ENCODE measurements at regions of chr3 and their contacts with region 1.

Region 1: GRCh38 chr3:17894434-17895060 is 152.1 kb upstream of the TBC1D5 start:
- DNase-seq: peak; percentile 59
- ATAC-seq: peak; percentile 33
- H3K4me3 ChIP-seq: no peak overlapping the region
- H3K4me3 Mint-ChIP-seq: no peak overlapping the region
- H3K27ac ChIP-seq: no peak overlapping the region
- H3K27ac Mint-ChIP-seq: no peak overlapping the region
- H3K4me1 ChIP-seq: no peaks in the 10 kb centered on the region
- H3K4me1 Mint-ChIP-seq: no peaks in the 10 kb centered on the region
- H3K27me3 ChIP-seq: no peaks in the 10 kb centered on the region
- H3K27me3 Mint-ChIP-seq: no peaks in the 10 kb centered on the region
- CTCF ChIP-seq: peak; percentile 53

Region 2: DNA sequence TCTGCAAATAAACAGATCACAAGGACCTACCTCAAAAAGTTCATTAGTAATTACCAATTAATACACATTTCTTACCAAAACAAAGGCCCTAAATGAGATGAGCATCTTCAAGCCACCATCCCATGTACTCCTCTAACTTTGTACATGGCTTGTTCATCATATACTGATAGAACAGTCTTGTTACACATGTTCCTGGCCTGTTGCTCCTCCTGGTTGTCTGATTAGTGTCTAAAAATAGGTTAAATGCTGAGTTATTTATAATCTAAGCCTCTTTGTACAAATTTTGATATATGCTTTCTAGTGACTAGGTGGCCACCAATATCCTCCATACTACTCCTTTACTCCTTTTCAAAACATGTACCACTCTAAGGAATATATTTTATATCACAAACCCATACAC is 177.1 kb before region 1 on chr3:
- CTCF ChIA-PET with region 1: no interaction called
- POLR2A ChIA-PET with region 1: no interaction called
- intact Hi-C with region 1: no loop called
- DNase-seq: no peak
- ATAC-seq: no peak
- H3K4me3 ChIP-seq: no peak overlapping the region
- H3K4me3 Mint-ChIP-seq: no peak overlapping the region
- H3K27ac ChIP-seq: no peak overlapping the region
- H3K27ac Mint-ChIP-seq: no peak overlapping the region
- H3K4me1 ChIP-seq: no peaks in the 10 kb centered on the region
- H3K4me1 Mint-ChIP-seq: peaks cover 15% of the 10 kb centered on the region
- H3K27me3 ChIP-seq: no peaks in the 10 kb centered on the region
- H3K27me3 Mint-ChIP-seq: no peaks in the 10 kb centered on the region
- CTCF ChIP-seq: no peak

Region 3: GRCh38 chr3:17979252-17979651 is 84.7 kb after region 1 on chr3:
- CTCF ChIA-PET with region 1: no interaction called
- POLR2A ChIA-PET with region 1: no interaction called
- intact Hi-C with region 1: no loop called
- DNase-seq: no peak
- ATAC-seq: no peak
- H3K4me3 ChIP-seq: no peak overlapping the region
- H3K4me3 Mint-ChIP-seq: no peak overlapping the region
- H3K27ac ChIP-seq: no peak overlapping the region
- H3K27ac Mint-ChIP-seq: no peak overlapping the region
- H3K4me1 ChIP-seq: no peaks in the 10 kb centered on the region
- H3K4me1 Mint-ChIP-seq: no peaks in the 10 kb centered on the region
- H3K27me3 ChIP-seq: peaks cover 0 to 23% (median 17%) of the 10 kb centered on the region in 4 experiments
- H3K27me3 Mint-ChIP-seq: peaks cover 38% of the 10 kb centered on the region
- CTCF ChIP-seq: no peak

Region 4: GRCh38 chr3:18127174-18127858 is 232.8 kb after region 1 on chr3:
- CTCF ChIA-PET with region 1: interaction called, 12 read pairs
- POLR2A ChIA-PET with region 1: no interaction called
- intact Hi-C with region 1: no loop called
- DNase-seq: peak; percentile 87
- ATAC-seq: peak; percentile 96
- H3K4me3 ChIP-seq: peak overlapping the region in 3 of 5 experiments; percentile 15 to 30 (median 25)
- H3K4me3 Mint-ChIP-seq: peak overlapping the region; percentile 35
- H3K27ac ChIP-seq: peak overlapping the region; percentile 57 to 72
- H3K27ac Mint-ChIP-seq: peak overlapping the region; percentile 91
- H3K4me1 ChIP-seq: peaks cover 30 to 32% of the 10 kb centered on the region in 2 donors
- H3K4me1 Mint-ChIP-seq: peaks cover 31% of the 10 kb centered on the region
- H3K27me3 ChIP-seq: no peaks in the 10 kb centered on the region
- H3K27me3 Mint-ChIP-seq: no peaks in the 10 kb centered on the region
- CTCF ChIP-seq: peak; percentile 20

Region 5: GRCh38 chr3:18295171-18295920 is 400.8 kb after region 1 on chr3:
- CTCF ChIA-PET with region 1: interaction called, 29 read pairs
- POLR2A ChIA-PET with region 1: no interaction called
- intact Hi-C with region 1: loop called (anchors 1 kb)
- DNase-seq: peak; percentile 62
- ATAC-seq: peak; percentile 90
- H3K4me3 ChIP-seq: no peak overlapping the region
- H3K4me3 Mint-ChIP-seq: no peak overlapping the region
- H3K27ac ChIP-seq: no peak overlapping the region
- H3K27ac Mint-ChIP-seq: no peak overlapping the region
- H3K4me1 ChIP-seq: peaks cover 4 to 5% of the 10 kb centered on the region in 2 donors
- H3K4me1 Mint-ChIP-seq: no peaks in the 10 kb centered on the region
- H3K27me3 ChIP-seq: no peaks in the 10 kb centered on the region
- H3K27me3 Mint-ChIP-seq: no peaks in the 10 kb centered on the region
- CTCF ChIP-seq: peak; percentile 72

Measured in B cell (primary cell).